CD14-positive monocyte (primary cell): ENCODE measurements at regions of chr2 and their contacts with region 1.

Region 1: DNA sequence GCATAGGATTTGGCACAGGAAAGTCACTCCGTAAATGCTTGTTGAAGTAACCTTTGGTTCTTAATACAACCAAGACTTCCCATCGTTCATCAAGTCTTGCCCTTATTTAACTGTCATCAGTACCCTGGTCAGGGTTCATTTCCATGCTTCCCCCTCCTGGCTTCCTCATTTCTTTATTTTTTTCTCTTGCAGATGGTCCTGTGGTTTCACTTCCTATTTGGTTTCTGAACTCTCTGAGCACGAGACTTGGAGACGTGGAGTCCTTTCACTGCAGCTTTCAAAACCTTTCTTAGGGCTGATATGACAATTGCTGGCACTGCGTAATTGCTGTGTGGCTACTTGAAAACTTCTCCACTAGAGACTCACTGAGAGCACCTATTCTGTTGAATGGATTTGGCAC is 59.9 kb upstream of the PID1 start:
- DNase-seq: peak; percentile 96 to 97 (median 96)
- H3K4me3 ChIP-seq: peak overlapping the region in 1 of 3 experiments; percentile 33
- H3K4me3 Mint-ChIP-seq: peak overlapping the region in 1 of 2 donors; percentile 68
- H3K27ac ChIP-seq: peak overlapping the region; percentile 90 to 98
- H3K27ac Mint-ChIP-seq: peak overlapping the region; percentile 97 to 100 (median 99)
- H3K4me1 ChIP-seq: peaks cover 63% of the 10 kb centered on the region in 2 donors
- H3K4me1 Mint-ChIP-seq: peaks cover 54% of the 10 kb centered on the region
- H3K27me3 ChIP-seq: no peaks in the 10 kb centered on the region
- H3K27me3 Mint-ChIP-seq: peaks cover 0 to 3% (median 0%) of the 10 kb centered on the region in 3 donors
- CTCF ChIP-seq: no peak

Region 2: DNA sequence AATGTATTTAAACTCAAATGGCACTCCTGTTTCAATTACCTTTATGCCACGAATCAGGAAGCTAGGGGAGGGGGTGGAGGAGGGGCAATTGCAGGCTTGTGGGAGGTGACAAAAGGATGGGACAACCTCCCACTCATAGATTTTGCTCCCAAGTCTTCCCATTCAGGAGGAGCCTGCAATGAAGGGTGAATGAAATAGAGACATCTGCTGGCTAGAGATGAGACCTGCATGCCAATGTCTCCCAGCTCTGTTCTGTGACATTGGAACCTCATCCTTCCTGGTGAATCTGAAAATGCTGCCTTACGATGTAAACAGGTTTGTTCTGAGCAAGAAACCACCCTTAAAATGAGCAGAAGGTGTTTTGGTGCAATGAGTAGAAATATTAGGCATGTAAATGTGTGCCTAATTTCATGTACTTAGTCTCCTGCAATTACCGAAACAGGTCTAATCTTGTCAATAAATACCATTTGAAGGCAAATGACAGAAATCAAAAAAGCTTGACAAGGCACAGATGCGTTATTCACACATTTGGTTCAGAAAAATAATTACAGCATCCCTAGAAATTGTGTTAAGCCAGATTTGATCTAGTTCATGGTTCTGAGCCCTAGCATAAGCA is 57.1 kb before region 1 on chr2:
- intact Hi-C with region 1: loop called in 1 of 2 experiments (anchors 10 kb)
- DNase-seq: peak in 2 of 3 donors; percentile 60 to 70
- H3K4me3 ChIP-seq: peak overlapping the region in 2 of 3 experiments; percentile 6 to 60
- H3K4me3 Mint-ChIP-seq: peak overlapping the region; percentile 59 to 68
- H3K27ac ChIP-seq: no peak overlapping the region
- H3K27ac Mint-ChIP-seq: peak overlapping the region in 2 of 7 donors; percentile 9 to 40
- H3K4me1 ChIP-seq: peaks cover 26 to 40% of the 10 kb centered on the region in 2 donors
- H3K4me1 Mint-ChIP-seq: peaks cover 41% of the 10 kb centered on the region
- H3K27me3 ChIP-seq: peaks cover 29 to 42% of the 10 kb centered on the region in 2 donors
- H3K27me3 Mint-ChIP-seq: peaks cover 40 to 57% (median 48%) of the 10 kb centered on the region in 3 donors
- CTCF ChIP-seq: peak; percentile 87

Region 3: DNA sequence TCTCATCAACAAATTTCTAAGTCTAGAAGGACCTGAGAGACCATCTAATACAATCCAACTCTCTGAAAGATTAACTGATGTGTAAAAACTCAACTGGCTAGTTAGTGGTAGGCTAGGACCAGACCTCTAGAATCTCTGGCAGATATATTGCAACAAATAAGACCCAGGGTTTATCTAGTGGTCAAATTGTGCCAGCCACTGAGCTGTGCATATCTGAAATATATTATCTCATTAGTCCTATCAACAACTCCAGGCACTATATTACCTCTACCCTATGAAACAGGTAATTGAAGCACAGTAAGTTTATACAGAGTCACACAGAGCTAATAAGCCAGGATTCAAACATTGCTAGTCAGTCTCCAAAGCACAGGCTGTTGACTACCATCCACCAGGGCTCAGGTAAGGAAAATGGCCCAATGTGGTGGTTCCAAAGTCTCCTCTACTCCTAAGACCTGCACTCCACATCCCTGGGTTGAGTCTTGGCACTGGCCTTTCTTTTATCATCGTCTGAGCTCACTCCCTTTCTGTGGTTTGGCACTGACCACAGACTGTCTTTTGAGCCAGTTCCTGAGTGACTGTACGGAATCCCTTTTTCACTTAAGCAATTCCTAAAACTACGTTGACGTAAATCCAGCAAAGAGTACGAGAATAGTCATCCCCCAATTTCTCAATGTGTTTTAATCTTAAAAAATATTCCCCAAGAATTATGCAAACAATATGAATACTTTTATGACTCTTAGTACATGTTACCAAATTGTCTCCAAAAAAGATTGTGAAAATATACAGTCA is 48.0 kb before region 1 on chr2:
- intact Hi-C with region 1: loop called (anchors 5 to 10 kb)
- DNase-seq: peak; percentile 95 to 99 (median 99)
- H3K4me3 ChIP-seq: no peak overlapping the region
- H3K4me3 Mint-ChIP-seq: no peak overlapping the region
- H3K27ac ChIP-seq: peak overlapping the region in 1 of 2 donors; percentile 84
- H3K27ac Mint-ChIP-seq: peak overlapping the region; percentile 85 to 95 (median 91)
- H3K4me1 ChIP-seq: peaks cover 15 to 27% of the 10 kb centered on the region in 2 donors
- H3K4me1 Mint-ChIP-seq: peaks cover 23% of the 10 kb centered on the region
- H3K27me3 ChIP-seq: peaks cover 0 to 2% of the 10 kb centered on the region in 2 donors
- H3K27me3 Mint-ChIP-seq: peaks cover 0 to 3% (median 3%) of the 10 kb centered on the region in 3 donors
- CTCF ChIP-seq: no peak

Region 4: GRCh38 chr2:229313591-229313990 is 17.4 kb before region 1 on chr2:
- intact Hi-C with region 1: loop called in 1 of 2 experiments (anchors 2 kb)
- DNase-seq: peak; percentile 92 to 99 (median 96)
- H3K4me3 ChIP-seq: no peak overlapping the region
- H3K4me3 Mint-ChIP-seq: no peak overlapping the region
- H3K27ac ChIP-seq: peak overlapping the region; percentile 86 to 98
- H3K27ac Mint-ChIP-seq: no peak overlapping the region
- H3K4me1 ChIP-seq: peaks cover 56 to 70% of the 10 kb centered on the region in 2 donors
- H3K4me1 Mint-ChIP-seq: peaks cover 13% of the 10 kb centered on the region
- H3K27me3 ChIP-seq: no peaks in the 10 kb centered on the region
- H3K27me3 Mint-ChIP-seq: no peaks in the 10 kb centered on the region
- CTCF ChIP-seq: no peak

Region 5: GRCh38 chr2:229416116-229416694 is 85.3 kb after region 1 on chr2:
- intact Hi-C with region 1: loop called in 1 of 2 experiments (anchors 2 kb)
- DNase-seq: peak; percentile 92 to 97 (median 96)
- H3K4me3 ChIP-seq: peak overlapping the region in 1 of 3 experiments; percentile 50
- H3K4me3 Mint-ChIP-seq: peak overlapping the region; percentile 26 to 78
- H3K27ac ChIP-seq: peak overlapping the region; percentile 88 to 99
- H3K27ac Mint-ChIP-seq: peak overlapping the region; percentile 99 to 100 (median 99)
- H3K4me1 ChIP-seq: peaks cover 49 to 61% of the 10 kb centered on the region in 2 donors
- H3K4me1 Mint-ChIP-seq: peaks cover 55% of the 10 kb centered on the region
- H3K27me3 ChIP-seq: no peaks in the 10 kb centered on the region
- H3K27me3 Mint-ChIP-seq: peaks cover 0 to 3% (median 2%) of the 10 kb centered on the region in 3 donors
- CTCF ChIP-seq: no peak

Region 6: DNA sequence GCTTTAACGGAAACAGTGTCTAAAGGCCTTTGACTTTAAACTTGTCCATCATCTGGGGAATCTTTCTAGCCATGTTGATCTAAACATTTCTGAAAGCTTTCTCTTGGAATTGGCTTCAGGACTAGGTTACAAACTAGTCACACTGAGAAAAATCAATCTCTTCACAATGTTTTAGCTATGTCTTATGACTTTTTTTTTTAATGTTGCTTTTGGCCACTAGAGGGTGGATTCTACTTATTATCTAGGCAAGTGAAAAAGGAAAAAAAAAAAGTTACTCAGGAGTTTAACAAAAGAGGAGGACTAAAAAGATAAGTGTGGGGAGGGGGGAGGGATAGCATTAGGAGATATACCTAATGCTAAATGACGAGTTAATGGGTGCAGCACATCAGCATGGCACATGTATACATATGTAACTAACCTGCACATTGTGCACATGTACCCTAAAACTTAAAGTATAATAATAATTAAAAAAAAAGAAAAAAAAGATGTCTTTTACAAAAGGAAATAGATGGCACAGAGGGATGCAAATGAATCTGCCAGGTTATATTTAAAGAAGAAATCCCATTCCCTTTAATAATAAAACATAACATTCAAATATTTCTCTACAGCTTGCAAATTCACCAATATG is 100.5 kb after region 1 on chr2:
- intact Hi-C with region 1: no loop called
- DNase-seq: peak; percentile 33 to 57 (median 44)
- H3K4me3 ChIP-seq: no peak overlapping the region
- H3K4me3 Mint-ChIP-seq: no peak overlapping the region
- H3K27ac ChIP-seq: no peak overlapping the region
- H3K27ac Mint-ChIP-seq: peak overlapping the region in 2 of 7 donors; percentile 5 to 64
- H3K4me1 ChIP-seq: peaks cover 0 to 4% of the 10 kb centered on the region in 2 donors
- H3K4me1 Mint-ChIP-seq: peaks cover 10% of the 10 kb centered on the region
- H3K27me3 ChIP-seq: peaks cover 6 to 7% of the 10 kb centered on the region in 2 donors
- H3K27me3 Mint-ChIP-seq: peaks cover 10 to 15% (median 11%) of the 10 kb centered on the region in 3 donors
- CTCF ChIP-seq: peak; percentile 71